GM10248 (cell line): ENCODE measurements at regions of chr11 and their contacts with region 1.

Region 1: GRCh38 chr11:13472001-13472400 is 9.0 kb upstream of the BTBD10 start:
- DNase-seq: no peak
- CTCF ChIP-seq: no peak

Region 2: GRCh38 chr11:13297917-13298356 is 174.1 kb before region 1 on chr11:
- CTCF ChIA-PET with region 1: no interaction called
- POLR2A ChIA-PET with region 1: no interaction called
- DNase-seq: no peak
- CTCF ChIP-seq: no peak

Region 3: GRCh38 chr11:13486926-13487660 is 15.1 kb after region 1 on chr11:
- CTCF ChIA-PET with region 1: interaction called, 19 read pairs
- POLR2A ChIA-PET with region 1: no interaction called
- DNase-seq: no peak
- CTCF ChIP-seq: peak; percentile 70

Region 4: GRCh38 chr11:13942983-13943382 is 471.0 kb after region 1 on chr11:
- CTCF ChIA-PET with region 1: no interaction called
- POLR2A ChIA-PET with region 1: no interaction called
- DNase-seq: no peak
- CTCF ChIP-seq: no peak